ENCODE measurements at regions of chr7 and their contacts with region 1.

Region 1: DNA sequence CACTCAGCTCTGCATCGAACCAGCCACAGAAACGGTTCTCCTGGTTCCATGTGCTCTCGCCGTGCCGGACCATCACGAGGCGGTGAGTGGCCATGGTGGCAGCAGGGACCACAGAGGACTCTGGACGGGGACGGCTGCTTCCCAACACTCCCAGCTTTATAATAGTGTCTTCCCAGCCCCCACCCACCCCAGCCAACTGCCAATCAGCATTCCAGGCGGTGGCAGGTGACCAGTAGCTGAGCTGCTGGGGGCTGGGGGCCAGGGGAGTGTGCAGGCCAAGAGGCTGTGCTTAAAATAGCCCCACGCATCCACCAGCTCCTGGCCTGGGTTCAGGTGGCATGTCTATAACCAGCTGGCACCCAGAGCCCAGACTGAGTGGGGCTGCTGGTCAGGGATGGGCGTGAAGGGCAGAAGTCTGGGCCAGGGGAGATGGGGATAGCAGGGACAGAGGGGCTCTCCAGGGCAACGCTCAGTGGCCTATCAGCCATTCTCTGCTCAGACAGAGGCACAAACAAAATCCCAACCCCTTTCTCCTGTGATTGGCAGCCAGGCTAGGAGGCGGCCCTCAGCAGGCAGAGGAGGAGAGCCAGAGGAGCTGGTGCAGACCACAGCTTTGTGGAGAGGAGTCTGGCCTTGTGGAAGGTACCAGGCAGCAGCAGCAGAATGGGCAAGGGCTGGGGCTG is at the start of gene PGAM2:
- DNase-seq: peak in 1 of 2 donors; percentile 75
- H3K4me3 ChIP-seq: peak within 1 kb of the TSS; percentile 4 to 33
- H3K27ac ChIP-seq: peak within 1 kb of the TSS; percentile 3 to 47
- H3K4me1 ChIP-seq: peaks cover 9 to 20% of the 10 kb centered on the region in 2 donors
- H3K27me3 ChIP-seq: no peaks in the 10 kb centered on the region
- CTCF ChIP-seq: no peak
- total RNA-seq, gene PGAM2: not detected

Region 2: GRCh38 chr7:44044315-44045225 is 21.0 kb before region 1 on chr7 and contains the start of gene DBNL:
- intact Hi-C with region 1: loop called (anchors 2 kb)
- DNase-seq: peak; percentile 69 to 96
- H3K4me3 ChIP-seq: peak within 1 kb of the TSS; percentile 86 to 96
- H3K27ac ChIP-seq: peak within 1 kb of the TSS; percentile 86 to 89
- H3K4me1 ChIP-seq: peaks cover 0 to 9% of the 10 kb centered on the region in 2 donors
- H3K27me3 ChIP-seq: no peaks in the 10 kb centered on the region
- CTCF ChIP-seq: no peak
- total RNA-seq, gene DBNL: 177 TPM

Region 3: DNA sequence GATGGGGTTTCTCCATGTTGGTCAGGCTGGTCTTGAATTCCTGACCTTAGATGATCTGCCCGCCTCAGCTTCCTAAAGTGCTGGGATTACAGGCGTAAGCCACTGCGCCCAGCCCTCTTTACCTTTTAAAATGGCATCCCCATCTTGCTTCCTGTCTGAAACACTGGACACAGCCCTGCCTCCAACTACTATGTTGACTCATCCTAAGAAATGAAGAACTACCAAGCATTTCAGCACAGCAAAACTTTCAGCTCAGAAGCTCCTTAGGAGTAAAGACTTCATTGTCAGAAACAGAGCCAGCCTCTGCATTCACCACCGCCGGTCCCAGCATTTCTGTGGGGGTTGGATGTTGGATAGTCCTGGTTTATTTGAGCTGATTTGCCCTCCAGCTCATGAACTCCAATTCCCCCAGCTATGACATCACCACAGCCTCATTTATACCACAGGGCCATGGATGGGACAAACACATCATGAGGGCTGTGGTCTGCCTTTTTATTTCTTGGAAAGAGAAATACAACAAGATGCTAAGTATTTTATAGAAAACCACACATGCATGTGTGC is 1632.1 kb after region 1 on chr7:
- intact Hi-C with region 1: no loop called
- DNase-seq: peak in 1 of 2 donors; percentile 33
- H3K4me3 ChIP-seq: no peak overlapping the region
- H3K27ac ChIP-seq: no peak overlapping the region
- H3K4me1 ChIP-seq: no peaks in the 10 kb centered on the region
- H3K27me3 ChIP-seq: no peaks in the 10 kb centered on the region
- CTCF ChIP-seq: no peak

Measured in ascending aorta (tissue), 2 donors.